CD8-positive, alpha-beta T cell (primary cell): ENCODE measurements at regions of chr15 and their contacts with region 1.

Region 1: DNA sequence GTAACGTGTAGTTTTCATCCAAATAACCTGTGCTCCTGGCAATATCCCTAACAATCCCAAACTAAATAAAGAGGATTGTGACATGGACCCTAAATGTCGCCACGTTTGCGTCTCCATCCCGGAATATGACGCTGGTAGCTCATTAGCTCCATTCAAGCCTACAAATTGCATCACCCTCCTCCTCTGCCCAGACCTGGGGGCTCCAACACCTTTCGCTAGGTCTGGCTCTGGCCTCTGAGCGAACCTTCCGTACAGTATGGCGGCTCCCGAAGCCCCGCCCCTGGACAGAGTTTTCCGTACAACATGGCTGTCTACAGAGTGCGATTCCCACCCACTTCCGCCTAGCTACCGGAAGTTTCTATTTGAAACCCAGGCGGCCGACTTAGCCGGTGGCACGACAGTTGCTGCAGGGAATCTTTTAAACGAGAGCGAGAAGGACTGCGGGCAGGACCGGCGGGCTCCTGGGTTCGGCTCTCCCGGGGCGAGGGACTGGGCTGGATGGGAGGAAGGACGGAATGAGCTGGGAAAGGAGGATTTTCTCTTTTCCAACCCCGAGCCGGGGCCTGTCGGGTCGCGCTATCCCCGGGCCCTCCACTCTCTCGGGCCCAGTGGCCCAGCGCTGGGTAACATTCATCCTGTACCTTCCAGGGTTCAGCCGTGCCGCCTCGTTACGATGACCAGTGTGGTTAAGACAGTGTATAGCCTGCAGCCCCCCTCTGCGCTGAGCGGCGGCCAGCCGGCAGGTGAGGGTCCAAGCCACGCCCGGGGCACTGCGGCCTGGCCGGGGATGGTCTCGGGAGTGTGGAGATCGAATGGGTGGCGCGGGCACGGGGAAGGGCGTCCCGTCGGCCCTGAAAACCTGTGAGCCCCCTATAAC is at the start of gene KNSTRN:
- DNase-seq: peak; percentile 84 to 95 (median 93)
- ATAC-seq: peak; percentile 99
- H3K4me3 ChIP-seq: peak within 1 kb of the TSS; percentile 73 to 93
- H3K4me3 Mint-ChIP-seq: peak within 1 kb of the TSS; percentile 99
- H3K27ac ChIP-seq: peak within 1 kb of the TSS in 1 of 2 experiments; percentile 54
- H3K27ac Mint-ChIP-seq: peak within 1 kb of the TSS; percentile 81
- H3K4me1 ChIP-seq: peaks cover 13% of the 10 kb centered on the region
- H3K4me1 Mint-ChIP-seq: peaks cover 16% of the 10 kb centered on the region
- H3K27me3 ChIP-seq: no peaks in the 10 kb centered on the region
- H3K27me3 Mint-ChIP-seq: no peaks in the 10 kb centered on the region
- CTCF ChIP-seq: no peak
- total RNA-seq, gene KNSTRN: 3.8 to 5.4 TPM

Region 2: GRCh38 chr15:39846108-39846507 is 536.7 kb before region 1 on chr15:
- CTCF ChIA-PET with region 1: no interaction called
- POLR2A ChIA-PET with region 1: no interaction called
- intact Hi-C with region 1: no loop called
- DNase-seq: no peak
- ATAC-seq: no peak
- H3K4me3 ChIP-seq: no peak overlapping the region
- H3K4me3 Mint-ChIP-seq: no peak overlapping the region
- H3K27ac ChIP-seq: no peak overlapping the region
- H3K27ac Mint-ChIP-seq: no peak overlapping the region
- H3K4me1 ChIP-seq: no peaks in the 10 kb centered on the region
- H3K4me1 Mint-ChIP-seq: no peaks in the 10 kb centered on the region
- H3K27me3 ChIP-seq: no peaks in the 10 kb centered on the region
- H3K27me3 Mint-ChIP-seq: peaks cover 9% of the 10 kb centered on the region
- CTCF ChIP-seq: no peak

Region 3: GRCh38 chr15:40357723-40358470 is 24.9 kb before region 1 on chr15 and contains the start of gene DISP2:
- CTCF ChIA-PET with region 1: interaction called, 3 read pairs
- POLR2A ChIA-PET with region 1: interaction called, 3 read pairs
- intact Hi-C with region 1: loop called in 1 of 2 experiments (anchors 1 kb)
- DNase-seq: peak; percentile 82 to 93 (median 88)
- ATAC-seq: peak; percentile 94
- H3K4me3 ChIP-seq: peak within 1 kb of the TSS; percentile 63 to 65
- H3K4me3 Mint-ChIP-seq: peak within 1 kb of the TSS; percentile 83
- H3K27ac ChIP-seq: no peak within 1 kb of the TSS
- H3K27ac Mint-ChIP-seq: no peak within 1 kb of the TSS
- H3K4me1 ChIP-seq: peaks cover 13% of the 10 kb centered on the region
- H3K4me1 Mint-ChIP-seq: peaks cover 9% of the 10 kb centered on the region
- H3K27me3 ChIP-seq: no peaks in the 10 kb centered on the region
- H3K27me3 Mint-ChIP-seq: peaks cover 2% of the 10 kb centered on the region
- CTCF ChIP-seq: no peak
- total RNA-seq, gene DISP2: 0.05 to 0.25 TPM